HEK293T (cell line): ENCODE measurements at regions of chr10 and their contacts with region 1.

Region 1: GRCh38 chr10:92848441-92849233 is at the start of gene EXOC6:
- DNase-seq: peak; percentile 92

Region 2: DNA sequence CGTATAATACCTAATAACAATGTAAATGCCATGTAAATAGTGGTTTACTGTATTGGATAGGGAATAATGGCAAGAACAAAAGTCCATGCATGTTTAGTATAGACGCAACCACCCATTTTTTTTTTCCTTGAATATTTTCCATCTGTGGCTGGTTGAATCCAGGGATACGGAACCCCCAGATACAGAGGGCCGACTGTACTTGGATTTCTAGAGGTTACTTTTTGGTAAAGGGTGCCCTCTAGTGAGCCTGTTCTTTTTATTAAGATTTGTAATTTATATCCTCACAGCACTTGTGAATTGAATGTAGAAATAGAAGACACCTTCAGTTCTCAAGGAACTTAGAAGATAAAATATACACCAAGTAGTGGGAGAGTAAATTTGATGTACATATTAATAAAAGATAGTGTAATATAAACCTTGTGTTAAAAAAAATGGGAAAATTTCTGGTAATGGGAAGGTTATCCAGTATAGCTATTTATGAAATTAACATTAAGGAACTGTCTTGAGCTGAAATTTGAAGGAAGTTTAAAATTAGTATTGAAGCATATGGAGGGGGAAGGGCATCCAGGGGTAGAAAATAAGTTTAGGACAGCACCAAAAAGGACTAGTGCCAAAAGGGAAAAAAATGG is 31.7 kb after region 1 on chr10:
- CTCF ChIA-PET with region 1: interaction called, 11 read pairs
- POLR2A ChIA-PET with region 1: interaction called, 3 read pairs
- DNase-seq: peak; percentile 23